ENCODE measurements at regions of chr6 and their contacts with region 1.

Region 1: DNA sequence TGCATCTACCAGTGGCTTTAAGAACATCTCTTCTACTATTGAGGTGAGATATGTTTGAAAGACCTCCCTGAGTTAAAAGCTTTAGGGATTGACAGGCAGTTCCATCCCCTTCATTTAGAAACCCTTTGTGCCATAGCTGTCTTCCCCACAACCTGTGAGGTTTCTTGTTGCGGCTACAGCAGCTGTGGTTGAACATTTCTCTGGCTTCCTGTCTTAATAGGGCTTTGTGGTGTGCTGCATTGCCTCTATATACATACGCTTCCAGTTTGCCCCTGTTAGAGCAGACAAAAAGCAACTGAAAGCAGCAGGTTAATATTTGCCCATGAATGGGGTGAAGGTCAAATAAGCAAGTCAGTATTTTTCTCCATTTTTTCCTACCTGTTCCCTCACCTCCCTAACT is 210.2 kb downstream of the TMEM200A start:
- DNase-seq: peak; percentile 87
- ATAC-seq: peak; percentile 99
- H3K4me3 ChIP-seq: no peak overlapping the region
- H3K27ac ChIP-seq: no peak overlapping the region
- H3K4me1 ChIP-seq: peaks cover 4% of the 10 kb centered on the region
- H3K27me3 ChIP-seq: no peaks in the 10 kb centered on the region
- CTCF ChIP-seq: no peak
- EP300 ChIP-seq: peak in 1 of 2 experiments; percentile 78; a peak in 2 of 4 replicates
- POLR2A ChIP-seq: no peak
- RAD21 ChIP-seq: 0 out of 2 replicates have a peak, but pooled peaks have one; percentile 4

Region 2: GRCh38 chr6:130513770-130514169 is 62.2 kb before region 1 on chr6:
- CTCF ChIA-PET with region 1: interaction called, 4 read pairs
- POLR2A ChIA-PET with region 1: interaction called, 3 read pairs
- RAD21 ChIA-PET with region 1: interaction called, 32 read pairs
- SMC1A ChIA-PET with region 1: interaction called, 17 read pairs
- in situ Hi-C with region 1: no loop called
- intact Hi-C with region 1: loop called (anchors 2 kb)
- DNase-seq: peak; percentile 45
- ATAC-seq: peak; percentile 69
- H3K4me3 ChIP-seq: no peak overlapping the region
- H3K27ac ChIP-seq: no peak overlapping the region
- H3K4me1 ChIP-seq: peaks cover 6% of the 10 kb centered on the region
- H3K27me3 ChIP-seq: no peaks in the 10 kb centered on the region
- CTCF ChIP-seq: no peak
- EP300 ChIP-seq: peak; percentile 76 to 78; a peak in 3 of 4 replicates
- POLR2A ChIP-seq: no peak
- RAD21 ChIP-seq: no peak

Region 3: GRCh38 chr6:130560231-130560630 is 15.7 kb before region 1 on chr6:
- CTCF ChIA-PET with region 1: interaction called, 10 read pairs
- POLR2A ChIA-PET with region 1: interaction called, 14 read pairs
- RAD21 ChIA-PET with region 1: interaction called, 22 read pairs
- SMC1A ChIA-PET with region 1: interaction called, 53 read pairs
- in situ Hi-C with region 1: no loop called
- intact Hi-C with region 1: no loop called
- DNase-seq: no peak
- ATAC-seq: peak; percentile 71
- H3K4me3 ChIP-seq: no peak overlapping the region
- H3K27ac ChIP-seq: no peak overlapping the region
- H3K4me1 ChIP-seq: no peaks in the 10 kb centered on the region
- H3K27me3 ChIP-seq: no peaks in the 10 kb centered on the region
- CTCF ChIP-seq: no peak
- EP300 ChIP-seq: no peak
- POLR2A ChIP-seq: no peak
- RAD21 ChIP-seq: no peak

Region 4: DNA sequence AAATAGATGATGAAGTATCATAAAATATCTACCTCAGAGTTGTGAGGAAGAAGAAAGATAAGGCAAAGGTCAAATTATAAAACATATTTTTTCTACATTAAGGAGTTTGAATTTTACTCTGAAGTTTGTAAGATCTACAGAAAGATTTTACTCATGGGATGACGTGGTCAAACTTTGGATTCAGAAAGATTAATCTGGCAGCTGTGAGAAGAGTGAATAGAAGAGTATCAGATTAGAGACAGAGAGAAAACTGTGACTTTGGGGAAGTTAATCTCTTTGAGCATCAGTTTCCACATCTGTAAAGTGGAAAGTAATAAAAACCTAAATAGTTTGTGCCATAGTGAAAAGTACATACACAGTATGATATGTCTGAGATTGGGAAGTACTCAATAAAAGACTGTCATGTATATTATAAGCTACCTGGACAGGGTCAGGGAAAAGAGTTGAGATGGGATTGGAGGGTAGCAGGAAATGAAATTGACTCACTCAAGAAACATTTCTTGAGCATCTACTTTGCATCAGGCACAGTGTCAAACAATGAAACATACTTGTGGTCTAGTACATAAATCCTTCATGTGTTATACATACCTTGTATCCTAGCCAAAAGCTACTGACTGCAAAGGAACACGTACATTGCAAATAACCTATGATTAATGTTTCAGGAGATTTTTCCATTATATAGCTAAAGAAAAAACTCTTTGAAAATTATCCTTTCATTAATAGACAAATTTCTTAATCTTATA is 12.0 kb after region 1 on chr6:
- CTCF ChIA-PET with region 1: interaction called, 6 read pairs
- POLR2A ChIA-PET with region 1: interaction called, 9 read pairs
- RAD21 ChIA-PET with region 1: no interaction called
- SMC1A ChIA-PET with region 1: interaction called, 27 read pairs
- in situ Hi-C with region 1: no loop called
- intact Hi-C with region 1: no loop called
- DNase-seq: no peak
- ATAC-seq: no peak
- H3K4me3 ChIP-seq: no peak overlapping the region
- H3K27ac ChIP-seq: no peak overlapping the region
- H3K4me1 ChIP-seq: no peaks in the 10 kb centered on the region
- H3K27me3 ChIP-seq: no peaks in the 10 kb centered on the region
- CTCF ChIP-seq: no peak
- EP300 ChIP-seq: no peak
- POLR2A ChIP-seq: no peak
- RAD21 ChIP-seq: no peak

Region 5: DNA sequence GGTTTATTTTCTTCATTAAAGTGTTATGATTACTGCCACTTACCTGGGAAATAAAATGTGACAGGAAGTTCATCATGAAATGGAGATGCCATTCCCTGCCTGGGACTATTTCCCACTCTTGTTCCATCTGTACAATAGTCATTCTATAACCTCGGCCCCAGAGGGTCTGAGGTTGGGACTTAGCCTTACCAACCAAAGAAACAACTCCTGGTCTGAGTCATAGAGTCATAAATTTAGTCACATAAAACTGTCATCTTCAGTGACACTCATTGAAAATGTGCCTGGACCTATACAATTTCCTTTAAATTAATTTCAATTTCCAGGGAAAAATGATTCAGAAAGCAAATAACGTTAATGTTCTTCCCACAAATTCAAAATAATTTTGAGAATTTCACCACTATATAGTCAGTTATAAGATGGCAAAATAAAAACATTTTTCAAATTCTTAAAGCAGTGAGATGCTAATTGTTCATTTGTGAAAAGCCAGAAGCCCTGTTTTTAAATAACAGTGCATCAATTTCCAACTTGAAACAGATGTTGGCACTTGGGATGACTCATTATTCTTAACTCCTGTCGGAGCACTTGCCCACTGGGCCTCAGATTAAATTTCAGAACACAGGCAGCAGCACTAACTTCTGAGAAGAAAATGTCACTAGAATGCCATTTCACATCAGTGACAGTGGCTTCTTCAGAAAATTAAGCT is 50.0 kb after region 1 on chr6:
- CTCF ChIA-PET with region 1: interaction called, 3 read pairs
- POLR2A ChIA-PET with region 1: interaction called, 5 read pairs
- RAD21 ChIA-PET with region 1: interaction called, 17 read pairs
- SMC1A ChIA-PET with region 1: interaction called, 20 read pairs
- in situ Hi-C with region 1: no loop called
- intact Hi-C with region 1: no loop called
- DNase-seq: peak; percentile 53
- ATAC-seq: peak; percentile 90
- H3K4me3 ChIP-seq: no peak overlapping the region
- H3K27ac ChIP-seq: no peak overlapping the region; the same call in 1 of the 2 replicates
- H3K4me1 ChIP-seq: peaks cover 6% of the 10 kb centered on the region; the same call in 1 of the 2 replicates
- H3K27me3 ChIP-seq: no peaks in the 10 kb centered on the region
- CTCF ChIP-seq: no peak
- EP300 ChIP-seq: peak; percentile 72 to 83; a peak in 3 of 4 replicates
- POLR2A ChIP-seq: no peak
- RAD21 ChIP-seq: peak; percentile 13; the same call in 1 of the 2 replicates

Region 6: DNA sequence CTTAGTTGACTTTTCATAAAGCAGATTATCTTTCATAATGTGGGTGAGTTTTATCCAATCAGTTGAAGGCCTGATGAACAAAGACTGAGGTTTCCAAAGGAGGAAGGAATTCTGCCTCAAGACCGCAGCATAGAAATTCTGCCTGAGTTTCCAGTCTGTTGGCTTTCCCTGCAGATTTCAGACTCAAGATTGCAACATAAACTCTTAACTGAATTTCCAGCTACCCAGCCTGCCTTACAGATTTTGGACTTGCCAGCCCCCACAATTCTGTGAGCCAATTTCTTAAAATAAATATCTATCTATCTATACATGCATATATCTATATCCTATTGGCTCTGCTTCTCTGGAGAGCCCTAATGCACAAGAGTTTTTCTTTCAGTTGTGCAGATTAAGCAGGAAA is 193.9 kb after region 1 on chr6:
- CTCF ChIA-PET with region 1: no interaction called
- POLR2A ChIA-PET with region 1: no interaction called
- RAD21 ChIA-PET with region 1: no interaction called
- SMC1A ChIA-PET with region 1: no interaction called
- in situ Hi-C with region 1: no loop called
- intact Hi-C with region 1: no loop called
- DNase-seq: no peak
- ATAC-seq: no peak
- H3K4me3 ChIP-seq: no peak overlapping the region
- H3K27ac ChIP-seq: no peak overlapping the region
- H3K4me1 ChIP-seq: no peaks in the 10 kb centered on the region
- H3K27me3 ChIP-seq: peaks cover 0 to 1% of the 10 kb centered on the region in 2 experiments; a peak in 1 of 4 replicates
- CTCF ChIP-seq: no peak
- EP300 ChIP-seq: no peak
- POLR2A ChIP-seq: no peak
- RAD21 ChIP-seq: no peak

Region 7: GRCh38 chr6:131269565-131270391 is 693.8 kb after region 1 on chr6:
- CTCF ChIA-PET with region 1: no interaction called
- POLR2A ChIA-PET with region 1: no interaction called
- RAD21 ChIA-PET with region 1: no interaction called
- SMC1A ChIA-PET with region 1: no interaction called
- in situ Hi-C with region 1: no loop called
- intact Hi-C with region 1: no loop called
- DNase-seq: no peak
- ATAC-seq: no peak
- H3K4me3 ChIP-seq: no peak overlapping the region
- H3K27ac ChIP-seq: no peak overlapping the region
- H3K4me1 ChIP-seq: no peaks in the 10 kb centered on the region
- H3K27me3 ChIP-seq: no peaks in the 10 kb centered on the region
- CTCF ChIP-seq: no peak
- EP300 ChIP-seq: no peak
- POLR2A ChIP-seq: no peak
- RAD21 ChIP-seq: no peak

Measured in GM12878 (cell line).